ENCODE measurements at regions of chr18 and their contacts with region 1.

Region 1: GRCh38 chr18:78915446-78916008 is 64.1 kb upstream of the SALL3 start:
- H3K4me3 Mint-ChIP-seq: no peak overlapping the region
- H3K27ac Mint-ChIP-seq: no peak overlapping the region
- H3K4me1 Mint-ChIP-seq: no peaks in the 10 kb centered on the region
- H3K27me3 Mint-ChIP-seq: peaks cover 3% of the 10 kb centered on the region

Region 2: DNA sequence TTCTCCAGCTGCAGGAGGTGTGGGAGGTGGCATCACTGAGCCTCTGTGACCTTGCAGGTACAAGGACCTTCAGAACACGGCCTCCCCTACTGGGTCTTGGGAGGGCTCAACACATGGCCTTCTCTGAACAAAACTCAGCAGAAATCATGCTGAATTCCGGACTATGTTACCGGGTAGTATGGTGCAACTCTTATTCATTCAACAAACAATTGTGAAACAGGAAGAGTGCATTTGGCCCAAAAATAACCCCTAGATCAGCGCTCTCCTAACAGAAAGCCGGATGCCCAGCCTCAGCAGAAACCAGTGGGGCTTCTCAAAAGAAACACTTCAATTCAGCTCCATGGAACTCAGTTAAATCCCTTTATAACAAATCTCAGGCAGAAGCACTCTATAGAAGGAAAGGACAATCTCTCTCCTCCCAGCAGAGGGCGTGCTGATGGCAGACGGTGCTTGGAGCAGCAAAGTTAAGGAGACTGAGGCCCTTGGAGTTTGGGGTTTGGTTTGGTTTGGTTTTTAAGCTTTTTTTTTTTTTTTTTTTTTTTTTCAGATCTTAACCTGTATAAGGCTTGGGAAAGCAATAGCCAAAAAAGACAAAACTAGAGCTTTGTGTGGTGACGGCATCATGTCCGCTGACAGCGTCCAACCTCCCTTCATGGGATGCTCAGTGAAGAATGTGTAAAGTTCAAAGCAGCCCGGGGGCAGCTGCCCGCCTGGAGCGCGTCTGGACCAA is 40.1 kb before region 1 on chr18:
- intact Hi-C with region 1: loop called (anchors 2 kb)
- H3K4me3 Mint-ChIP-seq: no peak overlapping the region
- H3K27ac Mint-ChIP-seq: no peak overlapping the region
- H3K4me1 Mint-ChIP-seq: peaks cover 28% of the 10 kb centered on the region
- H3K27me3 Mint-ChIP-seq: peaks cover 5% of the 10 kb centered on the region